Motor neuron (in vitro differentiated cells): ENCODE measurements at regions of chr7 and their contacts with region 1.

Region 1: GRCh38 chr7:132318352-132319318 is 257.6 kb downstream of the PLXNA4 start:
- ATAC-seq: peak; percentile 96 to 98 (median 97)
- H3K4me3 ChIP-seq: no peak overlapping the region
- H3K27ac ChIP-seq: no peak overlapping the region
- H3K4me1 ChIP-seq: peaks cover 0 to 3% of the 10 kb centered on the region in 2 donors

Region 2: GRCh38 chr7:132500727-132501440 is 182.2 kb after region 1 on chr7:
- in situ Hi-C with region 1: loop called in 1 of 9 experiments (anchors 10 kb)
- ATAC-seq: peak in 4 of 8 experiments; percentile 47 to 98 (median 86)
- H3K4me3 ChIP-seq: no peak overlapping the region
- H3K27ac ChIP-seq: no peak overlapping the region
- H3K4me1 ChIP-seq: peaks cover 11 to 15% of the 10 kb centered on the region in 2 donors

Region 3: GRCh38 chr7:132557489-132558044 is 238.9 kb after region 1 on chr7:
- in situ Hi-C with region 1: loop called in 1 of 9 experiments (anchors 25 kb)
- ATAC-seq: peak in 2 of 8 experiments; percentile 24 to 36
- H3K4me3 ChIP-seq: no peak overlapping the region
- H3K27ac ChIP-seq: no peak overlapping the region
- H3K4me1 ChIP-seq: no peaks in the 10 kb centered on the region

Region 4: DNA sequence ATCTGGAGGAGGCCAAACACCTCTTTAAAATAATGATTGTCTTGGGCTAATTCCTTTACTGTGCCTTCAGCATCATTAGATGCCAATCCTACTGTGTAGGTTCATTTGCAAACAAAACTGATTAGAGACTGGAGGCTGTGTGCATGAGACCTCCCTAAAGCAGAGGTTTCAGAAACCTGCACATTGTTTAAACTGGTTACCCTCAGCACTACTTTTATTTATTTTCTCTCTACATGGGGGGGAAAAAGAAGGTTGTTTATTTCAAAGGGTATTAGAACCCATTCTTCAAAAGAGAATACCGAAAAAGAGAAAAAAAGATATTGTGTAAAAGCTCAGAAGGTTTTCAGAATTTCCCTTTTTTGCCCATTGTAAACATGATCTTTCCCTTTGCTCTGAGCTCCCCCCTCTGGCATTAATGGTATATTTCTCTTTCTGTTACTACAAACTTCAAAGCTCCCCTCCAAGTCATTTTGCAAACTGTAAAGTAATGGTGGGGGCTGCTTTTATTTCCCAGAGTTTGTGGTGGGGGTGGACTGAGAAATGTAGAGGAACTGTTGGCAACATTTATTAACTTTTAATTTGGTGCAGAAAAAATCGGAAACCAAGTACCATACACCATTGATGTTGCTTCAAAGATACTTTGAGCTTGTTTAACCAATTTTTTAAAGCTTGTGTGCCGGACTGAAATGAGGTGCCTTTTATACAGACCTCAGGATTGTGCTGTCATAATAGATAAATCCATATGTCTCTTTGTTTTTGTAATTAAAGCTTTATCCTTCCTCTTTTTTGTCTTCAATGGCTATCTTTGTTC is 1115.6 kb after region 1 on chr7:
- in situ Hi-C with region 1: loop called in 1 of 9 experiments (anchors 25 kb)
- ATAC-seq: peak in 5 of 8 experiments; percentile 28 to 45 (median 42)
- H3K4me3 ChIP-seq: no peak overlapping the region
- H3K27ac ChIP-seq: no peak overlapping the region
- H3K4me1 ChIP-seq: no peaks in the 10 kb centered on the region